Esophagus muscularis mucosa (tissue), 4 donors: ENCODE measurements at regions of chr12 and their contacts with region 1.

Region 1: GRCh38 chr12:85920324-85920947 is 46.3 kb downstream of the NTS start:
- DNase-seq: no peak
- H3K4me3 ChIP-seq: no peak overlapping the region
- H3K27ac ChIP-seq: no peak overlapping the region
- H3K4me1 ChIP-seq: no peaks in the 10 kb centered on the region
- H3K27me3 ChIP-seq: no peaks in the 10 kb centered on the region
- CTCF ChIP-seq: peak; percentile 49 to 70 (median 56)
- EP300 ChIP-seq: no peak
- POLR2A ChIP-seq: no peak

Region 2: GRCh38 chr12:85468356-85469157 is 451.9 kb before region 1 on chr12:
- intact Hi-C with region 1: loop called (anchors 5 kb)
- DNase-seq: no peak
- H3K4me3 ChIP-seq: peak overlapping the region; percentile 44 to 57 (median 46)
- H3K27ac ChIP-seq: no peak overlapping the region
- H3K4me1 ChIP-seq: peaks cover 0 to 5% (median 5%) of the 10 kb centered on the region in 4 donors
- H3K27me3 ChIP-seq: peaks cover 0 to 24% (median 0%) of the 10 kb centered on the region in 4 donors
- CTCF ChIP-seq: peak; percentile 62 to 76 (median 65)
- EP300 ChIP-seq: no peak
- POLR2A ChIP-seq: no peak